ENCODE measurements at regions of chr4 and their contacts with region 1.

Region 1: GRCh38 chr4:149980941-149981340 is 97.3 kb upstream of the DCLK2 start:
- DNase-seq: peak; percentile 72
- H3K4me3 Mint-ChIP-seq: no peak overlapping the region
- H3K27ac Mint-ChIP-seq: no peak overlapping the region
- H3K4me1 Mint-ChIP-seq: no peaks in the 10 kb centered on the region
- H3K27me3 Mint-ChIP-seq: no peaks in the 10 kb centered on the region
- CTCF ChIP-seq: peak; percentile 66

Region 2: DNA sequence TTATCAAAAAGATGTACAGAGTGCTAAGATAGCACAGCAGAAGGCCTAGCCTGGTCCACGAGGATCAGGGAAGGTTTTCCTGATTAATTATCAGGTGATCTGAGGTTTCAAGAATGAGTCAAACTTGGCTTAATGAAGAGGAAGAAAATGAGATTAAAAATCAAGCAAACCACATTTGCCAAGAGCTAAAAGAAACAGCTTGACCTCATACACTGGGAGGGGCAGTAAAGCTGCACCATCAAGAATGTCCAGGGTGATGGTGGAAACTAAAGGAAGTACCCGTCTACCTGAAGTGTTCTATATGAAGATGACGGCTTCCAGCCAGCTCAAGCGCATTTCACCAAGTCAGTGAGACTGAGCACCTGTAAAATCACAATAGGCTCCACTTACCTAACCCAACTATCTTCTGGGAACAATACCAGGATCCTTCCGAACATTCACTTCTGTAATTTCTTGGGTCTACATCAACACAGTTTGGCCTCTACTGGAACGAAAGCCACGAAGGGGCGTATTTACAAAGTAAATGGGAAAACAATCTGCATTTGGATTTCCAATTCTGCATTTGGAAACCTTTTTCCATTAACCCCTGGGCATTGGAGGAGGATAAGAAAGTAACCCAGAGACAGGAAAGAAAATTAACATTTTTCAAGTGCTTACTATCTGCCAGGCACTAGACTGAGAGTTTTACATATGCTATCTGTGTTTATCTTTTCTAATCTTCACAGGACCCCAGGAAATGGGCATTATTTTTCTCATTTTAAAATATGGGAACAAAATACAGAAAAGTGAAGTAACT is 16.7 kb before region 1 on chr4:
- CTCF ChIA-PET with region 1: interaction called, 14 read pairs
- POLR2A ChIA-PET with region 1: no interaction called
- intact Hi-C with region 1: no loop called
- DNase-seq: no peak
- H3K4me3 Mint-ChIP-seq: no peak overlapping the region
- H3K27ac Mint-ChIP-seq: no peak overlapping the region
- H3K4me1 Mint-ChIP-seq: peaks cover 6% of the 10 kb centered on the region
- H3K27me3 Mint-ChIP-seq: no peaks in the 10 kb centered on the region
- CTCF ChIP-seq: no peak

Measured in MCF 10A (cell line).